Activated T-helper 1 cell treated with anti-CD3 and anti-CD28 coated beads, Interleukin-12 subunit alpha, Interleukin-12 subunit beta, Interleukin-2, Interleukin-4 antibody, amounts not matched to agents 30 ng/mL and 10 ng/mL and 1 ng/mL, durations not matched to agents 14 hours and 24 hours and 36 hours (primary cell): ENCODE measurements at regions of chr5 and their contacts with region 1.

Region 1: GRCh38 chr5:134225618-134226440 is at the start of gene PPP2CA:
- DNase-seq: peak; percentile 99
- H3K4me3 Mint-ChIP-seq: peak within 1 kb of the TSS; percentile 94
- H3K27ac Mint-ChIP-seq: peak within 1 kb of the TSS; percentile 97
- H3K4me1 Mint-ChIP-seq: peaks cover 46% of the 10 kb centered on the region
- H3K27me3 Mint-ChIP-seq: no peaks in the 10 kb centered on the region
- total RNA-seq, gene PPP2CA: 181 and 183 TPM in 2 replicates

Region 2: DNA sequence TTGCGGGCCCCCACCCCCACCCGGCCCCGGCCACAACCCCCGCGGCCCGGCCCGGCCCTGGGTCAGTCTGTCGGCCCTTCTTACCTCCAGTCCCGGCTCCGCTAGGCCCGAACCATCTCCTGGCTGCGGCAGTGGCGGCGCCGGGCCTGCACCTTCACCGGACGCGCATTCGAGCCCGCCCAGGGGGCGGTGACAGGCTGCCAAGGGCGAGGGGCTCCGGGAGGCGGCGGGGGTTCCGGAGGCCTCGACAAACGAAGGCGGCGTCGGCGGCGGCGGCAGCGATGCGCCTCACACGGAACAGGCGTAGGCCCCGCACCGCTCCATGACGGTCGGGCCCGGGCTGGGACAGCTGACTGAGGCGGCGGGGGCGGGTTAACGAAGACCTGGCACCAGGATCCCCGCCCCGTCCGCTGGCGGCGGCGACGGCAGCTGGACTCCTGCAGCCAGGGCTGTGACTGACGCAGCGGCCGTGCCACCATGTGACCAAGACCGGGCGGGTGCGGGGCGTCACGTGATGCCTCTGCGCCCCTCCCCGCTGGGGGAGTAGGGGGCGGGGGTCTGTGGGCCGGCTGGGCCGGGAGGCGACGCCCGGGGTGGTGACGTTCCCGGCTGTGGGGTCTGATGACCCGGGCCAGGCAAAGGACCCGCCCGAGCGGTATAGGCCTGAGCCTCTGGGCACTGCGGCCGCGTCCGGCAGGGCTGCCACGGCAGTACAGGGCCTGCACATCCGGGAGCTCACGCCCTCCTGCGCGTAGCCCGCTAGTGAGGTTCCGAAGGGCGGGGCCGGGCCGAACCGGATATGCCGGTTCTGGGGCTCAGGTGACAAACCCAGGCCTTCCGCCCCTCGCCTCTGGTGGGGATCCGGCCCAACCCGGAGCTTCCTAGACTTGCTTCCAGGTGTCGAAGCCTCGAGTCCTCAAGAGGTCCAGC is 1262.4 kb before region 1 on chr5 and contains the start of gene AFF4:
- intact Hi-C with region 1: loop called (anchors 5 kb)
- DNase-seq: peak; percentile 85
- H3K4me3 Mint-ChIP-seq: peak within 1 kb of the TSS; percentile 93
- H3K27ac Mint-ChIP-seq: peak within 1 kb of the TSS; percentile 96
- H3K4me1 Mint-ChIP-seq: peaks cover 17% of the 10 kb centered on the region
- H3K27me3 Mint-ChIP-seq: peaks cover 3% of the 10 kb centered on the region
- total RNA-seq, gene AFF4: 38.3 and 40.9 TPM in 2 replicates

Region 3: GRCh38 chr5:133794781-133795415 is 430.9 kb before region 1 on chr5:
- intact Hi-C with region 1: no loop called
- DNase-seq: no peak
- H3K4me3 Mint-ChIP-seq: no peak overlapping the region
- H3K27ac Mint-ChIP-seq: no peak overlapping the region
- H3K4me1 Mint-ChIP-seq: no peaks in the 10 kb centered on the region
- H3K27me3 Mint-ChIP-seq: peaks cover 17% of the 10 kb centered on the region

Region 4: DNA sequence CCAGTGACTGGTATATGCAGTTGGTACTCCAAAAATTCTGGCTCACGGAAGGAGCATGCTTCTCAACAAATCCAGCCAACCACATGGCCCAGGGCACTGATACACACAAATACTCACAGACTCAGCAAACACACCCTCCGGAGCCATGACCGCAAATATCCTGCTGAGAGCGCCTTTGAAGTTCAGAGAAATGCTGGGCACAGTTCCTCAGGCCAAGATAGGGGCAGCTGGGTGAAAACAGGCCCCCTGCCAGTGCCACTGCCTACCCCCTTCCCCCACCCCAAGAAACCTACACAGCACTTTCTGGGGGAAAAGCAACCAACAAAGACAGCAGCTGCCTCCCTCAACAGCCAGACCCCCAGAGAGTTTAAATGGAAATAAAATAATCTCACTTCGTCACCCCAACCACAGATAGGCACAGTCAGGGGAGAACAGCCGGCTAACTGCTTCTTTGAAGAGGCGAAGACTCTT is 377.5 kb before region 1 on chr5:
- intact Hi-C with region 1: no loop called
- DNase-seq: no peak
- H3K4me3 Mint-ChIP-seq: no peak overlapping the region
- H3K27ac Mint-ChIP-seq: no peak overlapping the region
- H3K4me1 Mint-ChIP-seq: no peaks in the 10 kb centered on the region
- H3K27me3 Mint-ChIP-seq: peaks cover 13% of the 10 kb centered on the region

Region 5: GRCh38 chr5:134101686-134102439 is 124.0 kb before region 1 on chr5:
- intact Hi-C with region 1: loop called (anchors 5 kb)
- DNase-seq: peak; percentile 58
- H3K4me3 Mint-ChIP-seq: peak overlapping the region; percentile 26
- H3K27ac Mint-ChIP-seq: no peak overlapping the region
- H3K4me1 Mint-ChIP-seq: peaks cover 59% of the 10 kb centered on the region
- H3K27me3 Mint-ChIP-seq: peaks cover 36% of the 10 kb centered on the region

Region 6: DNA sequence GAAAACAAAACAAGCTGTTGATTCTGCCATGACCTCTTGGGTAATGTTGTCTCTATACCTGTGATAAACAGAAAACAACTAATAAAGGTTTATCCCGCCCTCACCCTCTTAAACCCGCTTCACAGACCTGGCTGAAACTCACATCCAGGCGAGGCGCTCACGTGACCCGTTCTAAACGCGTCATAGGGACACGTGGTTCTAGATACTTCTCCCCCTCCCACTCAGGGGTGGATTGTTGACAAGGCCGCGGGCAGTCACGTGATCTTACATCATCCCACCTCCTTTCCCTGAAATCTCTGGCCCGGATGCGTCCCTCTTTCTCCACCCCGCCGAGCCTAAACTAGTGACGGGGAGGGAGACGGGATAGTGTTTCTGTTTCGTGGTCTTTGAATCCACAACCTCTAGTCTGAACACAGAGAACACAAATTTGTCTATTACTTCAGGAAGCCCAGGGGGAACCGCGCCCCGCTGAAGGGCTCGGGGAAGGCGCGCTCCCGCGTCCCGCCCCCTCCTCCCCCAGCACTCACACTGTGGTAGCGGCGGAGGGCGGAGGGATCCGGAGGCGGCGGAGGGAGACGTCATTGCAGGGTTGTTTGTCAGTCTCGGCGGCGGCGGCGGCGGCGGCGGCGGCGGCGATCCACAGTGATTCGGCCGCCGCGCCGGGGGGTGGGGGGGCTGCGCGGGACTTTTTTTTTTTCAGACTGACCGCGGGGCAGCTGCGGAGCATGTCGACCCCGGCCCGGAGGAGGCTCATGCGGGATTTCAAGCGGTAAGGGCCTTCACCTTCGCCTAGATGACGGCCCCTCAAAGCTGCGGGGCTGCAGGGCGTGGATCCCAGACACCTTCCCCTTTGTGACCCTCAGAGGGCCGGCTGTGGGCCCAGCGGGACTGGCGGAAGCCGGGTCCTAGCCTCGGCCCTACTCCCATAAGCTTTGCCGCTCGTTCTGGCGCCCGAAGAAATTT is 145.3 kb after region 1 on chr5 and contains the start of gene UBE2B:
- intact Hi-C with region 1: loop called (anchors 1 kb)
- DNase-seq: peak; percentile 95
- H3K4me3 Mint-ChIP-seq: peak within 1 kb of the TSS; percentile 99
- H3K27ac Mint-ChIP-seq: peak within 1 kb of the TSS; percentile 97
- H3K4me1 Mint-ChIP-seq: peaks cover 66% of the 10 kb centered on the region
- H3K27me3 Mint-ChIP-seq: peaks cover 2% of the 10 kb centered on the region
- total RNA-seq, gene UBE2B: 98.9 and 108 TPM in 2 replicates

Region 7: GRCh38 chr5:134493461-134494055 is 267.7 kb after region 1 on chr5:
- intact Hi-C with region 1: no loop called
- DNase-seq: no peak
- H3K4me3 Mint-ChIP-seq: no peak overlapping the region
- H3K27ac Mint-ChIP-seq: no peak overlapping the region
- H3K4me1 Mint-ChIP-seq: peaks cover 10% of the 10 kb centered on the region
- H3K27me3 Mint-ChIP-seq: no peaks in the 10 kb centered on the region

Region 8: DNA sequence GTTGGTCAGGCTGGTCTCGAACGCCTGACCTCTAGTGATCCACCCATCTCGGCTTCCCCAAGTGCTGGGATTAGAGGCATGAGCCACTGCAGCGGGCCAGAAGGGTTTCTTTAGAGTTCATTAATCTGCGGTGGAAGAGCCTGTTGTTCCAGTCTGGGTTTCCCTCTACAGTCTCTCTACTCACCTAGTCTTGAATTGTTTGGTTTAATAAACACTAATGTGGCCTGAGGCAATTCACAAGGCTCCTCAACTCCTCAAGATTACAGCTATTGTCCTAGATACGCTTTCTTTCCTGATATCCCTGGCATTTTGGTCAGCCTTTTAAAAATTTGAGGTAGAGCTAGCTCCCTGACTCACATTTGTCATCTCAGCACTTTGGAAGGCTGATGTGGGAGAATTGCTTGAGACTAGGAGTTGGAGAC is 411.3 kb after region 1 on chr5:
- intact Hi-C with region 1: loop called (anchors 1 kb)
- DNase-seq: no peak
- H3K4me3 Mint-ChIP-seq: no peak overlapping the region
- H3K27ac Mint-ChIP-seq: no peak overlapping the region
- H3K4me1 Mint-ChIP-seq: peaks cover 7% of the 10 kb centered on the region
- H3K27me3 Mint-ChIP-seq: no peaks in the 10 kb centered on the region

Region 9: DNA sequence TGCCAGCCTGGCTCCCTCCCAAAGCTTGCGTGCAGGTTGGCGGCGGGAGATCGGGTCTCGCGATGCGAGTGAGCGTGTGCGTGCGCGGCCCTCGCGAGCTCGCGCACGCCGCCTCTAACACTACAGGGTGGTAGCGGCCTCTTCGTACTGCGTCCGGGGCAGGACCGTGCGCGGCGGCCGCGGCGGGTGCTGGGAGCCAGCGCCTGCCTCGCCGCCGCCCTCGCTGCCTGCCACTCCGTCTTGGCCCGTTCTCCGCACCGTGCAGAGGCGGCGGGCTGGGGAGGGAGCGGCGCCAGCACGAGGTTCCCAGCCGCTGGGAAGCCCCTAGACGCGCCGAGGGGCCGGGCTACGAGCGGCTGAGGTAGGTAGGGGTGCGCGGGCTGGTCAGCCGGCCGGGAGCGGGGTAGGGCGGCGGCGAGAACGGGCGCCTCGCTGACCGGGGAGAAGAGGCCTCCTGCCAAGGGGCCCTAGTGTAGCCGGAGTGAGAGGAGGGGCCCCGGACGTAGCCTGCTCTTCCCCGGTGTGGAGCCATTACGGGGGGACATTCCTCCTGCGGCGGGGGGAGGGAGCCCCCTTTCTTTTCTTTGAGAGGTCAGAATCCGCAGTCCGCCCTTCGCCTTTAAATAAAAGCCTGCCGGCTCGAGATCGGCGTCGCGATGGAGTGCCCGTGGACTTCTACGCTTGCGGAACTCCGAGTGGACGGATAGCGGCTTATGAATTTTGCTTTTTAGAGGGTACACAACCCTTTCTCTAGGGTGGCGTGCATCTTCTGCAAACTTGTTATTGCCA is 620.2 kb after region 1 on chr5 and contains the start of gene C5orf24:
- intact Hi-C with region 1: loop called (anchors 2 kb)
- DNase-seq: peak; percentile 90
- H3K4me3 Mint-ChIP-seq: peak within 1 kb of the TSS; percentile 97
- H3K27ac Mint-ChIP-seq: peak within 1 kb of the TSS; percentile 97
- H3K4me1 Mint-ChIP-seq: peaks cover 25% of the 10 kb centered on the region
- H3K27me3 Mint-ChIP-seq: no peaks in the 10 kb centered on the region
- total RNA-seq, gene C5orf24: 42.2 and 43.2 TPM in 2 replicates